Activated CD8-positive, alpha-beta T cell treated with anti-CD3 and anti-CD28 coated beads, Interleukin-2, amount 10 ng/mL, durations not matched to agents 7 days and 5 days (primary cell): ENCODE measurements at regions of chr17 and their contacts with region 1.

Region 1: DNA sequence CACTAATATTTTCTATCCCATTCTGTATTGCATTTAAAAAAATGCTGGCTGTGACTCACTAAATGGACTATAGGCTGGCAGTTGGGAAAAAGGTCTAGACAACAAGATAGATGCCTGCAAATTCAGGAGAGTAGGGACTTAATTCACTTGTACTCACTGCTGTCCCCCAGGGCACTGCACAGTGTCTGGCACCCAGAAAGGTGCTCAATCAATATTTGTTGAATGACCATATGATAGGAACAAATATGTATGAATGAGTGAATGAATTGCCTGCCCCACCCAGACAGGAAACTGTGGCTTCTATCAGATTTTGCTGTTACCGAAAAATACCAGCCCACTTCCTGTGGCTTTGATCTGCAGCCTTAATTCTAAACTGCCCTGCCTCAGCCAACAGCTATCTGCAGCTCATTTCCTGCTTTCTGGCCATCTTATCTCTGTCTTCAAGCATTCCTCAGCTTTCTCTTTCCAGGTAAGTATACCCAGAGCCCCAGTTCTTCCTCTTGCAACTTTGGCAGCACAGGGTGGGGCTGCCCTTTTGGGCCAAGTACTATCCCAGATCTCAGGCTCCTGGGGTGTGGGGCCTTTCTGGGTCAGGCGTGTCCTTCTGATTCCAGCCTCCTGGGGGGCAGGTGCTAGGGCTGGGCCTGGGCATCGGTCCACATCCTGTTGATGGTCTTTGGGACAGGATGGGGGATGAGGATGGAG is 15.3 kb upstream of the TNS4 start:
- DNase-seq: peak; percentile 92
- ATAC-seq: peak; percentile 84
- H3K4me3 Mint-ChIP-seq: peak overlapping the region; percentile 70
- H3K27ac Mint-ChIP-seq: peak overlapping the region; percentile 84
- H3K4me1 Mint-ChIP-seq: peaks cover 71% of the 10 kb centered on the region
- H3K27me3 Mint-ChIP-seq: no peaks in the 10 kb centered on the region

Region 2: GRCh38 chr17:40303009-40303657 is 213.6 kb before region 1 on chr17:
- CTCF ChIA-PET with region 1: no interaction called
- POLR2A ChIA-PET with region 1: no interaction called
- DNase-seq: peak; percentile 63
- ATAC-seq: no peak
- H3K4me3 Mint-ChIP-seq: no peak overlapping the region
- H3K27ac Mint-ChIP-seq: no peak overlapping the region
- H3K4me1 Mint-ChIP-seq: peaks cover 18% of the 10 kb centered on the region
- H3K27me3 Mint-ChIP-seq: no peaks in the 10 kb centered on the region

Region 3: DNA sequence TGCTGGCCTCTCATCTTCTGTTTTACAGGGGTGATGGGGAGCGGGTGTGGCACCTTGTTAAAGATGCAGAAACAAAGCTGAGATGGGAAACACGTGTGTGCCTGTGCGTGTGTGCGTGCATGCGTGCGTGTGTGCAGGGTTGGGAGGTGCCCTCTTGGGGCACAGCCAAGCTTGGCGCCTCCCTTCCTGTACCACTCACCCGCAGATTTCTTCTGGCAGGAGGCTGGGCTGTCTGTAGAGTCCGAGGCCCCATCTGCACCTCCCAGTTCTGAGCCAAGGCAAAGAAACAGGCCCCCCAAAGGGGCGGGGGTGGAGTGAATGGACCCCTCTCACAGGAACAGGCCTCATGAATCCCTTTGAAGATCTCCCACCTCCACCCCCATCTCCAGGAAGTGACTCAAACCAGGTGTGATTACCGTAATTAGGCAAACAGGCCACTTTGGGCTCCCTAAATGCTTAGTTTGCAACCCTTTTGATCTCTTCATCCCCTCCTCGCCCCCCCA is 36.2 kb before region 1 on chr17:
- CTCF ChIA-PET with region 1: interaction called, 17 read pairs
- POLR2A ChIA-PET with region 1: interaction called, 29 read pairs
- DNase-seq: peak; percentile 91
- ATAC-seq: peak; percentile 91
- H3K4me3 Mint-ChIP-seq: peak overlapping the region; percentile 70
- H3K27ac Mint-ChIP-seq: peak overlapping the region; percentile 98
- H3K4me1 Mint-ChIP-seq: peaks cover 87% of the 10 kb centered on the region
- H3K27me3 Mint-ChIP-seq: no peaks in the 10 kb centered on the region